MCF 10A (cell line): ENCODE measurements at regions of chr4 and their contacts with region 1.

Region 1: GRCh38 chr4:122827879-122828601 is 1.4 kb downstream of the FGF2 start:
- DNase-seq: peak; percentile 75
- H3K4me3 Mint-ChIP-seq: peak overlapping the region; percentile 77
- H3K27ac Mint-ChIP-seq: peak overlapping the region; percentile 91
- H3K4me1 Mint-ChIP-seq: peaks cover 26% of the 10 kb centered on the region
- H3K27me3 Mint-ChIP-seq: no peaks in the 10 kb centered on the region
- CTCF ChIP-seq: no peak

Region 2: GRCh38 chr4:122732329-122733026 is 95.6 kb before region 1 on chr4 and contains the start of gene BBS12:
- CTCF ChIA-PET with region 1: interaction called, 3 read pairs
- POLR2A ChIA-PET with region 1: interaction called, 4 read pairs
- intact Hi-C with region 1: loop called (anchors 1 kb)
- DNase-seq: peak; percentile 99
- H3K4me3 Mint-ChIP-seq: peak within 1 kb of the TSS; percentile 84
- H3K27ac Mint-ChIP-seq: peak within 1 kb of the TSS; percentile 93
- H3K4me1 Mint-ChIP-seq: peaks cover 4% of the 10 kb centered on the region
- H3K27me3 Mint-ChIP-seq: no peaks in the 10 kb centered on the region
- CTCF ChIP-seq: peak; percentile 8
- total RNA-seq, gene BBS12: 4.7 and 8.3 TPM in 2 replicates

Region 3: GRCh38 chr4:122783301-122784215 is 44.5 kb before region 1 on chr4:
- CTCF ChIA-PET with region 1: interaction called, 6 read pairs
- POLR2A ChIA-PET with region 1: interaction called, 15 read pairs
- intact Hi-C with region 1: loop called (anchors 5 kb)
- DNase-seq: peak; percentile 77
- H3K4me3 Mint-ChIP-seq: peak overlapping the region; percentile 3
- H3K27ac Mint-ChIP-seq: peak overlapping the region; percentile 57
- H3K4me1 Mint-ChIP-seq: peaks cover 31% of the 10 kb centered on the region
- H3K27me3 Mint-ChIP-seq: no peaks in the 10 kb centered on the region
- CTCF ChIP-seq: no peak

Region 4: GRCh38 chr4:122854447-122855352 is 26.7 kb after region 1 on chr4:
- CTCF ChIA-PET with region 1: interaction called, 3 read pairs
- POLR2A ChIA-PET with region 1: interaction called, 27 read pairs
- intact Hi-C with region 1: no loop called
- DNase-seq: no peak
- H3K4me3 Mint-ChIP-seq: peak overlapping the region; percentile 67
- H3K27ac Mint-ChIP-seq: peak overlapping the region; percentile 98
- H3K4me1 Mint-ChIP-seq: peaks cover 22% of the 10 kb centered on the region
- H3K27me3 Mint-ChIP-seq: no peaks in the 10 kb centered on the region
- CTCF ChIP-seq: no peak

Region 5: GRCh38 chr4:122898370-122899150 is 70.5 kb after region 1 on chr4:
- CTCF ChIA-PET with region 1: interaction called, 6 read pairs
- POLR2A ChIA-PET with region 1: interaction called, 8 read pairs
- intact Hi-C with region 1: loop called (anchors 5 kb)
- DNase-seq: peak; percentile 90
- H3K4me3 Mint-ChIP-seq: no peak overlapping the region
- H3K27ac Mint-ChIP-seq: peak overlapping the region; percentile 57
- H3K4me1 Mint-ChIP-seq: peaks cover 21% of the 10 kb centered on the region
- H3K27me3 Mint-ChIP-seq: no peaks in the 10 kb centered on the region
- CTCF ChIP-seq: no peak